Dendritic cell treated with granulocyte-macrophage colony-stimulating factor and Interleukin-4, amounts not matched to agents 40 ng/mL and 50 ng/mL, for 4 days (primary cell): ENCODE measurements at regions of chr6 and their contacts with region 1.

Region 1: DNA sequence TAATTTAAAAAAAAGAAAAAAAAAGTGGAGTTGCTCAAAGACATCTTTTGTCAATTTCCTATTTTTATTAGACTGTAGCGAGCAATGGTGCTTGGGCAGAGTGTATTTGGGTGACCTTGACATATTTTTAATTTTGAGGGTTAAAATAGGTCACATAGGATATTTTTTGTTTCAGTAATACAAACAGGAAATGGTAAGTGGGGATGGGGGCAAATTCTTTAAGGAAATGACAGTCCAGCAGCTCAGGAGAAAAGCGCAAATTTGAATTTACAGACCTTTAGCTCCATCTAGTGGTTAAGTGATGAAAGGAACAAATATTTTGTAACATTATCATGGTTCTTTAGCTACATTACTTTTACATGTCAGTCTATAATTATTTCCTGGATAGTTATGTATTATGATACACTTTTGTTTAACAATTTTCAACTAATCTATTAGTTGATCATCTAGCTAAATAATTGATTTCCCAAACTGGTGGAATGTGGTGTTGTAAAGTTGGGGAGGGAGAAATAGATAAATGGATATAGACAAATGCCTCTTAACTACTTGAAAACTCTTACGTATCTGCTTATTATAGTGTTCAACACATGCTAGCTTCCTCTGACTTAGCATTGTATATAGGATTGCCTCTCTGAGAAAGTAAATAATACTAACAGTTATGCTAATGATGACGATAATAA is 10.0 kb downstream of the CITED2 start:
- H3K4me3 Mint-ChIP-seq: no peak overlapping the region
- H3K27ac Mint-ChIP-seq: peak overlapping the region; percentile 43
- H3K4me1 Mint-ChIP-seq: peaks cover 45% of the 10 kb centered on the region
- H3K27me3 Mint-ChIP-seq: no peaks in the 10 kb centered on the region

Region 2: GRCh38 chr6:138817822-138818308 is 546.6 kb before region 1 on chr6:
- intact Hi-C with region 1: loop called (anchors 2 kb)
- H3K4me3 Mint-ChIP-seq: no peak overlapping the region
- H3K27ac Mint-ChIP-seq: no peak overlapping the region
- H3K4me1 Mint-ChIP-seq: peaks cover 13% of the 10 kb centered on the region
- H3K27me3 Mint-ChIP-seq: no peaks in the 10 kb centered on the region

Region 3: DNA sequence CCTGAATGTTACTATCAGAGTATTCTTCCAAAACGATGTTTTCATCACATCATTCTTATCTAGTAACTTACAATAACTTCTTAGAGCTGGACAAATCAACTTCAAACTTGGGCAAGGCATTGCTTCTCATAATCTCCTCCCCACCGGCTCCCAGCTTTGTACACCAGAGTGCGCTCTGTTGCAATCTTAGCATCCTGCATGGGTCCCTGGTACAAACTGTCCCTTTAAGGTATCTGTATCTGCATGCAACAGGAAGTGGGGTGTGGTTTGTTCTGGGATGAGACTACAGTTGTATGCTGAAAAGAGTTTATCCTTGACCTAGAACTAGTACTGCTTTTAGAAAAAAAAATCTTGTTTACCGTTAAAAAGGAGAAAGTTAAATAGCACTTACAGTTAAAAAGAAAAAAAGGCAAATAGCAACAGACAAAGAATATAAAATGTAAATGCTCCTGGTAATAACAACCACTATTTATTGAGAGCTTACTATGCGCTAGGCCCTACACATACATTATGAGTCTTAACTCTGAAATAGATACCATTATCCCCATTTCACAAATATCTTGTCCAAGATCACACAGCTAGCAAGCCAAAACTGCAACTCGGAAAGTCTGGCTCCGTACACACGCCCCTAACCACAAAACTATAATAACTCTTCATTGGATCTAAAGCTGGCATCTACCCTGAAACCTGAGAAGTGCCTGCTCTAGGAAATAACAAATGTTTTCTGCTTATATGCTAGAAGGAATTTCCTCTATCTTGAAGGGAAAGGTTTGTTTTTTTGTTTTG is 239.4 kb before region 1 on chr6:
- intact Hi-C with region 1: loop called (anchors 2 kb)
- H3K4me3 Mint-ChIP-seq: no peak overlapping the region
- H3K27ac Mint-ChIP-seq: peak overlapping the region; percentile 65
- H3K4me1 Mint-ChIP-seq: peaks cover 26% of the 10 kb centered on the region
- H3K27me3 Mint-ChIP-seq: no peaks in the 10 kb centered on the region

Region 4: DNA sequence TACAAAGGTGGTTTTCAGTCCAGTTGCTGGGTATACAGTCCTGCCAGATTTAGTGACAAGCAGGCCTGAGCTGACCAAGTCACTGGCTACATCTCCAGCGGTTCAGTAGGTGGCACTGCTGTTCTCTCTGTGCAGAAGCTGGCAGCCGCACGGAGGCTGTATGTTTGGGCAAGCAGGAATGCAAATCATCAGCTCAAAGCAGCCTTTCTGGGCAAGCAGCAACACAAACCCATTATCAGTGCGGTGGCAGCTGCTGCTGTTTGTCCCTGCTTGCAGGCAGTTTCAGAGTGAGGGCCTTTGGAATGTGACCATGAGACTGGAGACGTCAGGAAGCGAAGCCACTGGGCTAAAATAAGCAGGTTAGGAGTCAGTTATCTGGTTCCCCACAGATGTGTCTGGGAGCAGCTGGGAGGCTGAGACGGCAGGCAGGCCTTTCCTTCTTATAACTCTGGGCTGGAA is 145.1 kb before region 1 on chr6:
- intact Hi-C with region 1: loop called (anchors 1 kb)
- H3K4me3 Mint-ChIP-seq: no peak overlapping the region
- H3K27ac Mint-ChIP-seq: peak overlapping the region; percentile 65
- H3K4me1 Mint-ChIP-seq: peaks cover 7% of the 10 kb centered on the region
- H3K27me3 Mint-ChIP-seq: no peaks in the 10 kb centered on the region

Region 5: DNA sequence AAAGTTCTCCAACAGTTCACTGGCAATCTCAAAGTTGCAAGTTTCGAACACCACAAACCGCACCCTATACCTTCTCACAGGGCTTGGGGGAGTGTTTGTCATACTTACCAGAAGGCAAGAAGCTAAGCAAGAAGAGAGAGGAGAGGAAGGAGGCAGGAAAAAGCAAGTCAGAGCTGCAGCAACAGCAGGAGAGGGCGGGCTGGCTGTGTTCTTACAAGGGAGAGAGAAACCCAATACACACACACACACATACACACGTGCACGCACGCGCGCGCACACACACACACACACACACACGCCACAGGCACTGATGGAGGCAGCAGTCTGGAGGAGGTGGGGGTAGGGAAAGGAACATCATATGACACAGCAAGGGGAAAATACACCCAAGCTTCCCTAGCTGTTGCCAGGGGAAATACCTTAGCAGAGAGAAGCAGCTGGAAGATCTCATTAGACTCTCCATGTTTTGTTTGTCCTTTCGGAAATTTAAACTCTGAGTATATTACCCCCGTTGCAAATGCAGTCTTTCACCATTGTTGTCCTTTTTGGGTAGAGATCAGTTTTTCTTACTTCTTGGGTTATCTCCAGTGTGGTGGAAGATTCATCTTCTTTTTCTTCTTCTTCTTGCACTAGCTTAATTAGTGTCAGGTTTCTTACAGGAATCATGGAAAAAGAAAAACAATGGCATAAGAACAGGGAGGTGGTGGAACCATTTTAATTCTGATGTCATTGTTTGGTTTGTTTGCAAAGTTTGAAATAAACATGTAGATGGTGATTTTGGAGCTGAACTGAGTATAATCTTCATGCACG is 72.4 kb before region 1 on chr6 and contains the start of gene TXLNB:
- intact Hi-C with region 1: loop called (anchors 5 kb)
- H3K4me3 Mint-ChIP-seq: peak within 1 kb of the TSS; percentile 46
- H3K27ac Mint-ChIP-seq: peak within 1 kb of the TSS; percentile 94
- H3K4me1 Mint-ChIP-seq: peaks cover 51% of the 10 kb centered on the region
- H3K27me3 Mint-ChIP-seq: no peaks in the 10 kb centered on the region

Region 6: GRCh38 chr6:139336488-139336887 is 28.0 kb before region 1 on chr6:
- intact Hi-C with region 1: no loop called
- H3K4me3 Mint-ChIP-seq: no peak overlapping the region
- H3K27ac Mint-ChIP-seq: peak overlapping the region; percentile 67
- H3K4me1 Mint-ChIP-seq: peaks cover 46% of the 10 kb centered on the region
- H3K27me3 Mint-ChIP-seq: no peaks in the 10 kb centered on the region